Tibial artery (tissue), 4 donors: ENCODE measurements at regions of chr1 and their contacts with region 1.

Region 1: DNA sequence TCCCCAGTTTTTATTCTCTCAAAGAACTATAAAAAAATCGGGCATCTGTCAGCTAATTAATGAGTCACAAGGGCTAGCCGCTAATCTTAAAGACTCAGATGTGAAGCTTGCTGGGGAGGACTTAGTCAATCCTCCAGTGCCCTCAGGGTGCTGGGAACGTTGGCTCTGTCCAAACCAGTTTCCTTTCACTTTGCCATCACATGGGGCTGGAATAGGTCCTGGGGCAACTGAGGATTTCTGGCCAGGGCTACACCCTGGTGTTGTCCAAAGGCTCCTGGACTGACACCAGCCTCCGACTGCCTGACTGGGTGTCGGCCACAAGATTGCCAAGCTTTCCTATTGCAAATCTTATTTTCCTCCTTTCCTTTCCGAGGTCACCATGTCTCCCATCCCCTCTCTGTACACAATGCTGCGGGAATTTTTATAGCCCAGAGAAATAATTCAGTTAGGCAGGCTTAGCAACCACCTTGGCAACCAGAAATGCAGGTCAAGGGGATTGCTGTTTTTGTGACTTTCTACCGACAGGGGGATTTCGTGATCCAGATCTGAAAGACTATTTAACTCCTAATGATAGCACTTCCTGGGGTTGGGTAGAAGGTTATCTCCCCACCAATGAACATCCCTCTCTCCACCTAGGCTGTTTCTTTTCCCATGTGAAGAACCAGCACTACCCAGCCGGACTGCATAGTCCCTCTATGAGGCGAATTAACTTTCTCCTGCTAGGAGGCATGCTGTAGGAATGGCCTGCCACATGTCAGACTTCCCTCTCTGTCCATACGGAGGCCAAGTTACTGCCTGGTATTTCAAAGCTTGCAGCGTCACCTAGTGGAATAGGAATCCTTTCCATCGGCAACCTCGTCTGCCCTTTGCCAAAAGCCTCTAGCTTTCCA is 29.9 kb upstream of the CTBS start:
- DNase-seq: peak; percentile 57 to 86
- H3K4me3 ChIP-seq: peak overlapping the region; percentile 40 to 48
- H3K27ac ChIP-seq: peak overlapping the region; percentile 68 to 72
- H3K4me1 ChIP-seq: peaks cover 0 to 29% (median 16%) of the 10 kb centered on the region in 4 donors
- H3K27me3 ChIP-seq: no peaks in the 10 kb centered on the region
- CTCF ChIP-seq: peak; percentile 83 to 88

Region 2: DNA sequence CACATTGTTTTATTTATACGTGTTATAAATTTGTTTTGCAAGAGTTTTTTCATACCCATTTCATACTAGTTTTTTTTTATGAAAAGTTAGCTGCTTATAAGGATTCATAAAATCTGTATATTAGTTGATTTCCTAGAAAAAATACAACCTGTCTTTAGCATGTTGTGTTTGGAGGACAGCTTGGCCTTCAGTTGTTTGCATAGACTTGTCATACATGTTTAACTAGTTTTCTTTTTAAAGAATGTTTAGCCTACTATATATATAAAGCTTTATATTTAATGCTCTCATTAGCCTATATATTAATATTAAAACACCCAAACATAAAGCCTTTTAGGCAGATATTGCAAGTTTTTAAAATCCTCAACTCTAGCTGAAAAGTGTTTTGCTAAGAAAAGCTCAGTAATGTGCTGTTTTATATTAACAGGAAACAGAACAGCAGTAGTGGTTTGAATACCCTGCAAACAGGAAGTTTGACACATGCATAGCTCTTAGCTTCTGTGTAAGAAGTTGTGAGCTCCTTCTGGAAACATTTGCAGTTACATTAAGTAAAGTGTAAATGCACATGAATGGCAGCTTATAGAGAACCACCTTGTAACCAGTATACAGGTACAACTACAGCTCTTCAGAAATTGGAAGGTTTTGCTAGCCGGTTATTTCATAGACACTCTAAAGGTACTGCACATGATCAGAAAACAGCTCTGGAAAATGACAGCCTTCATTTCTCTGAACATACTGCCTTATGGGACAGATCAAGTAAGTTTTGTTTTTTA is 460.2 kb before region 1 on chr1 and contains the start of gene PRKACB:
- intact Hi-C with region 1: loop called (anchors 10 kb)
- DNase-seq: no peak
- H3K4me3 ChIP-seq: no peak within 1 kb of the TSS
- H3K27ac ChIP-seq: no peak within 1 kb of the TSS
- H3K4me1 ChIP-seq: no peaks in the 10 kb centered on the region
- H3K27me3 ChIP-seq: no peaks in the 10 kb centered on the region
- CTCF ChIP-seq: no peak

Region 3: GRCh38 chr1:84442256-84442655 is 161.9 kb before region 1 on chr1:
- intact Hi-C with region 1: loop called (anchors 5 kb)
- DNase-seq: no peak
- H3K4me3 ChIP-seq: no peak overlapping the region
- H3K27ac ChIP-seq: no peak overlapping the region
- H3K4me1 ChIP-seq: peaks cover 0 to 4% (median 0%) of the 10 kb centered on the region in 4 donors
- H3K27me3 ChIP-seq: no peaks in the 10 kb centered on the region
- CTCF ChIP-seq: peak; percentile 49 to 80

Region 4: GRCh38 chr1:84550826-84551225 is 53.4 kb before region 1 on chr1:
- intact Hi-C with region 1: no loop called
- DNase-seq: no peak
- H3K4me3 ChIP-seq: no peak overlapping the region
- H3K27ac ChIP-seq: no peak overlapping the region
- H3K4me1 ChIP-seq: no peaks in the 10 kb centered on the region
- H3K27me3 ChIP-seq: no peaks in the 10 kb centered on the region
- CTCF ChIP-seq: no peak

Region 5: GRCh38 chr1:84883286-84883685 is 279.1 kb after region 1 on chr1:
- intact Hi-C with region 1: no loop called
- DNase-seq: no peak
- H3K4me3 ChIP-seq: no peak overlapping the region
- H3K27ac ChIP-seq: no peak overlapping the region
- H3K4me1 ChIP-seq: no peaks in the 10 kb centered on the region
- H3K27me3 ChIP-seq: no peaks in the 10 kb centered on the region
- CTCF ChIP-seq: no peak